Panc1 (cell line): ENCODE measurements at regions of chr4 and their contacts with region 1.

Region 1: DNA sequence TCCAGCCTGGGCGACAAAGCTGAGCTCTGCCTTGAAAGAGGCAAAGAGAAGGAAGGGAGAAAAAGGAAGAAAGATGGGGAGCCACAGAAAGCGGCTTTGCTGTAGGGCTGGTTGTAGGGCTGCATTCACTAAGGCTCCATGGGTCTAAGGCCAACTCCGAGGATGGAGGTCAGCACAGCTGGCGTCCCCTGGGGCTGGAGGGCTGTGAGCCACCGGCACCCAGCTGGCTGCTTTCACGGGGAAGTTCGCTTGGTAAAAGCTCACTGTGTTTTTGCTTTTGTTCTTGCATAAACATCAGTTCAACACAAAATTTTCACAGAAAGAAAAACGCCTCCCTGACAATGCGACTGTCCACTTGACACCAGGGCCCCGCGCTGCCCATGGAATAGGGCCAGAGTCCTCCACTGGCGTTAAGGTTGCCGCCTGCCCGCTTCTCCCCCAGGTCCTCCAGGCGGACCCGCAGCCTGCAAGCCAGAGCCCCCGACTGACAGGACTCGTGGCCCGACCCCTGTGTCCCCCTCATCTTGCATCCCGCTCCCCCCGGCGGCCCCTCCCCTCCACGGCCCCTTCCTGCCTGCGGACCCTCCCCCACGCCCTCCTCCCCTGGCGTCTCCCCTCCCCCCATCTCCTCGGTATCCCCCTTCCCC is 1.1 kb downstream of the RNF212 start:
- DNase-seq: no peak
- ATAC-seq: no peak
- H3K4me3 ChIP-seq: no peak overlapping the region
- H3K27ac ChIP-seq: no peak overlapping the region
- H3K4me1 ChIP-seq: no peaks in the 10 kb centered on the region
- H3K27me3 ChIP-seq: no peaks in the 10 kb centered on the region
- CTCF ChIP-seq: no peak

Region 2: DNA sequence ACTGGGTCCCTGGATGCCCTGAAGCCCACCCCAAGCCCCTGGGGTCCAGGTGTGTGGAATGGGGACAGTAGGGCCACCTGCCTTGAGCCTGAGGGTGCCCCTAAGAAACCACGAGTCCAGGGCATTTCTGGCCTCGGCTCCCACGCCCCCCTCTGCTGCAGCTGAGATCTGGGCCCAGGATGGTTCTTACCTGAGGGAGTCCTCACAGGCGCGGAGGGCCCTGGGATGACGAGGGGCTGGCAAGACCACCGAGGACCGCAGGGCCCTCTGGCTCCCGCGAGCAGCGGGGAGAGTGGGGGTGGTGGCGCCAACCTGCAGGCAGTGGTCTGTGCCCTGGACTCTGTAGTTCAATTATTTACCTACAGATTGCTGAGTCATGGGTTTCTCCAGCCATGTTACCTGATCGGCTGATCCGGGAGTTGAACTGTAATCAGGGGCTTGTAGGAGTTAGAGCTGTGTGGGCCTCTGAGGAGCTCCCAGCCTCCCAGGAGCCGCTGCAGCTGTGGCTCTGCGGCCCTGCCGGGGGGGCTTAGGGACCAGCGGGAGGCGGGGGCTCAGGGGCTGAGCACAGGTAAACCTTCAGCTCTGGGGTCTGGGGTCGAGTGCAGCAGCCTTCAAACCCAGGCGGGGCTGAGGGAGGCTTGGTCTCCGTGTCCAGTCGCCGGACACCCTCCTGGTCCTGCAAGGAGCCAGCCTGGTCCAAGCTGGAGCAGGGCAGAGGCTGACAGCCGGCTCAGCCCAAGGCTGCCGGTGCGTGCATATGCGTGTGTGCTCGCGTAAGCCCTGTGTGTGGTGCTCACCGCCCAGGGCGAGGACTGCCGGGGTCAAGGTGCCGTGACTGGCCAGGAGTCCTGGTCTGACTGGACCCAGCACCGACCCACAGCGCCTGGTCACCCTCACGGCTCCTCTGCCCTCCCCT is 118.9 kb before region 1 on chr4 and contains the start of gene SLC26A1:
- CTCF ChIA-PET with region 1: no interaction called
- POLR2A ChIA-PET with region 1: interaction called, 11 read pairs
- in situ Hi-C with region 1: no loop called
- intact Hi-C with region 1: no loop called
- DNase-seq: no peak
- ATAC-seq: peak; percentile 64
- H3K4me3 ChIP-seq: peak within 1 kb of the TSS in 1 of 2 experiments; percentile 37; a peak in 3 of 4 replicates
- H3K27ac ChIP-seq: peak within 1 kb of the TSS; percentile 73
- H3K4me1 ChIP-seq: peaks cover 18% of the 10 kb centered on the region
- H3K27me3 ChIP-seq: no peaks in the 10 kb centered on the region
- CTCF ChIP-seq: no peak
- total RNA-seq, gene SLC26A1: 1.8 TPM

Region 3: DNA sequence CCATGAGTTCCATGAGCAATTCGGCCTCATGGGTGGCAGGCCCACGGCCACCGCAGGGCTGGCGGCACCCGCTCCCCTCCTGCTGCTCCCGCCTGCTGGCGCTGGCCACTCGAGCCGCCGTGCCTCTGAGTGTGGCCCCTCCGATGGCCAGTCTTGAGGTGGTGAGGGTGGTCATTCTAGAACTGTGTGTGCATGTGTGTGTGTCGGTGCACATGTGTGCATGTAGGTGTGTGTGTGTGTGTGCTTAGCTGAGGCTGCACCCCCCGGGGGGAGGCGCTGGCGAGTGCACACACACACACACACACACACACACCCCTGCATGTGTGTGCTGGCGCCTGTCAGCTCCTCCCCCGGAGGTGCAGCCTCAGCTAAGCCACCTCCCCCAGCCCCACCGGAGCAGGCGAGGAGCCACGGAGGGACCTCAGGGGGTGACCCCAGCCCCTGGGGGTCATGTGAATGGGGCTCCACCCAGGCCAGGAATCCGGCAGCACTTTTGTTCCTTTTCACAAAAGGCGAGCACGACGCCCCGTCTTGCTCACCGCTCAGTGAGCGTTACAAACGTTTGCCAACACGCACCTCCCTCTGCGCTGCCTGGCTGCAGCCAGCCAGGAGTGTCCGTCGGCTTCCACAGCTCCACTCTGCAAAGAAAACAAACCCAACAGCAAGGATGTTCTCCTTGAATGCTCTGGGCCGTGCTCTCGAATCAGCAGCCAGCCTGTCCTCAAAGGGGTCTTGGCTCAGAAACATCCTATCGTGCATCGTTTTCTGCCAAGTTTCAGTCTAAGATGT is 71.0 kb before region 1 on chr4:
- CTCF ChIA-PET with region 1: interaction called, 18 read pairs
- POLR2A ChIA-PET with region 1: no interaction called
- in situ Hi-C with region 1: no loop called
- intact Hi-C with region 1: no loop called
- DNase-seq: no peak
- ATAC-seq: peak; percentile 27
- H3K4me3 ChIP-seq: peak overlapping the region; percentile 7 to 11; a peak in 2 of 4 replicates
- H3K27ac ChIP-seq: peak overlapping the region; percentile 70; the same call in 1 of the 2 replicates
- H3K4me1 ChIP-seq: peaks cover 76% of the 10 kb centered on the region
- H3K27me3 ChIP-seq: no peaks in the 10 kb centered on the region
- CTCF ChIP-seq: no peak

Region 4: DNA sequence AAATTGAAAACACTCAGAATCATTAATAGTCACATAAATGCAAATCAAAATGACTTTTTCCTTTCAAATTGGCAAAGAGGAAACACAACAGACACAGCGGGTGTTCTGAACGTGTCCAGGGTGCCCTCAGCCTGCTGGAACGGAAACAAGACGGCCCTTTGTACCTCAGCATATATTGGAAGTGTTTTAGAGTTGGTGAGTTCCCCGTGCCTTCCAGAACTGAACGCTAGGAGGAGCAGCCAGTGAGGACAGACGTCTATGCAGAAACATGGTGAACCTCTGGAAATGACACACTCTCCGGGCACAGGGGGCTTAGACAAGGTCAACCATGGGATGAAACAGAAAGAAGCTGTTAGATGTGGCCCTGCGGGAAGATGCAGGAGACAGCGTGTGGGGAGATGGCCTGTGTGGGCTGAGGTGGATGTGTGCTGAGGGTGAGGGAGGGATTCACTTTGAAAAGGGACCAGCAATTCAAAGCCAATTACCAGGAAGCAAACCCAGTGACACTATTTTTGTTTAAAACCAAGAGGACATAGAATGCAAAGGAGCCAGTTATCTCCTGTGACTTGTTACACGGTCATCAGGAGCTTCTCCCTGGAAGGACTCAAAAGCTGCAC is 39.4 kb before region 1 on chr4:
- CTCF ChIA-PET with region 1: no interaction called
- POLR2A ChIA-PET with region 1: no interaction called
- in situ Hi-C with region 1: no loop called
- intact Hi-C with region 1: no loop called
- DNase-seq: peak; percentile 13
- ATAC-seq: peak; percentile 92
- H3K4me3 ChIP-seq: no peak overlapping the region
- H3K27ac ChIP-seq: no peak overlapping the region
- H3K4me1 ChIP-seq: no peaks in the 10 kb centered on the region
- H3K27me3 ChIP-seq: no peaks in the 10 kb centered on the region
- CTCF ChIP-seq: peak; percentile 74

Region 5: GRCh38 chr4:1478766-1479355 is 366.6 kb after region 1 on chr4:
- CTCF ChIA-PET with region 1: no interaction called
- POLR2A ChIA-PET with region 1: interaction called, 11 read pairs
- in situ Hi-C with region 1: no loop called
- intact Hi-C with region 1: no loop called
- DNase-seq: no peak
- ATAC-seq: no peak
- H3K4me3 ChIP-seq: no peak overlapping the region
- H3K27ac ChIP-seq: no peak overlapping the region
- H3K4me1 ChIP-seq: no peaks in the 10 kb centered on the region
- H3K27me3 ChIP-seq: no peaks in the 10 kb centered on the region; the same call in 1 of the 2 replicates
- CTCF ChIP-seq: no peak

Region 6: GRCh38 chr4:1693129-1693896 is 581.0 kb after region 1 on chr4:
- CTCF ChIA-PET with region 1: no interaction called
- POLR2A ChIA-PET with region 1: no interaction called
- in situ Hi-C with region 1: no loop called
- intact Hi-C with region 1: no loop called
- DNase-seq: peak; percentile 64
- ATAC-seq: peak; percentile 91
- H3K4me3 ChIP-seq: no peak overlapping the region
- H3K27ac ChIP-seq: peak overlapping the region; percentile 51; the same call in 1 of the 2 replicates
- H3K4me1 ChIP-seq: no peaks in the 10 kb centered on the region
- H3K27me3 ChIP-seq: no peaks in the 10 kb centered on the region
- CTCF ChIP-seq: peak; percentile 92